Activated B cell treated with CpG ODN at 0.5 μM for 24 hours (primary cell): ENCODE measurements at regions of chr1 and their contacts with region 1.

Region 1: GRCh38 chr1:203625628-203626019 is 1.0 kb upstream of the ATP2B4 start:
- DNase-seq: no peak
- ATAC-seq: peak; percentile 48
- H3K4me3 Mint-ChIP-seq: peak overlapping the region; percentile 85
- H3K27ac Mint-ChIP-seq: peak overlapping the region; percentile 88
- H3K4me1 Mint-ChIP-seq: peaks cover 47% of the 10 kb centered on the region
- H3K27me3 Mint-ChIP-seq: no peaks in the 10 kb centered on the region
- CTCF ChIP-seq: no peak

Region 2: GRCh38 chr1:203593723-203594122 is 31.9 kb before region 1 on chr1:
- CTCF ChIA-PET with region 1: interaction called, 4 read pairs
- POLR2A ChIA-PET with region 1: no interaction called
- intact Hi-C with region 1: loop called (anchors 1 kb)
- DNase-seq: peak; percentile 23
- ATAC-seq: peak; percentile 42
- H3K4me3 Mint-ChIP-seq: no peak overlapping the region
- H3K27ac Mint-ChIP-seq: no peak overlapping the region
- H3K4me1 Mint-ChIP-seq: no peaks in the 10 kb centered on the region
- H3K27me3 Mint-ChIP-seq: peaks cover 2% of the 10 kb centered on the region
- CTCF ChIP-seq: no peak

Region 3: DNA sequence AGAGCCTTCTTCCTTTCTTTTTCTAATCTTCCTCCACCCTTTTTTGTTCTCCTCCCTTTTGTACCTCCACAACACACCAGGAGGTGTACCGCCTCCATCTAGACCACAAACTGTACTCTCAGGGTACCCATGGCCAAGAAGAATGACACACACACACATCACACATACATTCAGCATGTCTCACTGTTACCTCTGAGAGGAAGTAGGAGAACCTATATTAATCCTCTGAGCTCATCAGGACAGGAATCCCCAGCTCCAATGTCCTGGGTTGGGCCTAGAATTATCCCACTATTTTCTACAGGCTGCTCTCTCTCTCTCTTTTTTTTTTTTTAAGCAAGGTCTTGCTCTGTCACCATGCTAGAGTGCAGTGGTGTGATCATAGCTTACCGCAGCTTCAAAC is 37.7 kb after region 1 on chr1:
- CTCF ChIA-PET with region 1: no interaction called
- POLR2A ChIA-PET with region 1: no interaction called
- intact Hi-C with region 1: loop called (anchors 5 kb)
- DNase-seq: no peak
- ATAC-seq: no peak
- H3K4me3 Mint-ChIP-seq: no peak overlapping the region
- H3K27ac Mint-ChIP-seq: no peak overlapping the region
- H3K4me1 Mint-ChIP-seq: no peaks in the 10 kb centered on the region
- H3K27me3 Mint-ChIP-seq: no peaks in the 10 kb centered on the region
- CTCF ChIP-seq: no peak

Region 4: GRCh38 chr1:203795441-203796235 is 170.0 kb after region 1 on chr1 and contains the starts of genes ZBED6 and ZC3H11A:
- CTCF ChIA-PET with region 1: no interaction called
- POLR2A ChIA-PET with region 1: no interaction called
- intact Hi-C with region 1: loop called (anchors 5 kb)
- DNase-seq: peak; percentile 90
- ATAC-seq: peak; percentile 97
- H3K4me3 Mint-ChIP-seq: peak within 1 kb of the TSS; percentile 99
- H3K27ac Mint-ChIP-seq: peak within 1 kb of the TSS; percentile 95
- H3K4me1 Mint-ChIP-seq: peaks cover 51% of the 10 kb centered on the region
- H3K27me3 Mint-ChIP-seq: no peaks in the 10 kb centered on the region
- CTCF ChIP-seq: no peak
- total RNA-seq, gene ZBED6: 26.3 and 31.4 TPM in 2 replicates
- total RNA-seq, gene ZC3H11A: 85.6 and 91.6 TPM in 2 replicates